MCF 10A (cell line): ENCODE measurements at regions of chr6 and their contacts with region 1.

Region 1: GRCh38 chr6:30130887-30131862 is 4.8 kb upstream of the TRIM40 start:
- DNase-seq: peak; percentile 91
- H3K4me3 Mint-ChIP-seq: peak overlapping the region; percentile 40
- H3K27ac Mint-ChIP-seq: peak overlapping the region; percentile 7
- H3K4me1 Mint-ChIP-seq: peaks cover 20% of the 10 kb centered on the region
- H3K27me3 Mint-ChIP-seq: peaks cover 28% of the 10 kb centered on the region
- CTCF ChIP-seq: peak; percentile 96

Region 2: DNA sequence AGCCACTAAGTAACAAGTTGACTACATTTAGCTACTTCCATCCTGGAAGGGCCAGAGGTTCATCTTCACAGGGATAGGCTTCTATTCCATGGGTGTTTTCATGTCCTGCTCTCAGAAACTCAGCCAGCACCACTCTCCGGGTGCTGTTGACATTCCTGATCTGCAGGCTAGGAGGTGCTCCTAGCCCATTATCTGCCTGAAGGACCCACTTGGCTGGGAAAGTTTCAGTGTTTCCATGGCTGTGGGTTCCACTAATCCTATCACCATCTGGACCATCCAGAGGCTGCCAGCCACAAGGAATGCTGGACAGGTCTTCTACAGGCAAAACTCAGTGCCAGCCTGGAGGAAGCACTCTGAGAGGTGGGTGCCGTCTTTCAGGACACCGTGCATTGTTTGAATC is 258.4 kb before region 1 on chr6:
- CTCF ChIA-PET with region 1: no interaction called
- POLR2A ChIA-PET with region 1: no interaction called
- intact Hi-C with region 1: no loop called
- DNase-seq: no peak
- H3K4me3 Mint-ChIP-seq: no peak overlapping the region
- H3K27ac Mint-ChIP-seq: no peak overlapping the region
- H3K4me1 Mint-ChIP-seq: no peaks in the 10 kb centered on the region
- H3K27me3 Mint-ChIP-seq: peaks cover 23% of the 10 kb centered on the region
- CTCF ChIP-seq: no peak

Region 3: GRCh38 chr6:29995340-29995777 is 135.8 kb before region 1 on chr6:
- CTCF ChIA-PET with region 1: no interaction called
- POLR2A ChIA-PET with region 1: no interaction called
- intact Hi-C with region 1: no loop called
- DNase-seq: peak; percentile 91
- H3K4me3 Mint-ChIP-seq: no peak overlapping the region
- H3K27ac Mint-ChIP-seq: no peak overlapping the region
- H3K4me1 Mint-ChIP-seq: peaks cover 45% of the 10 kb centered on the region
- H3K27me3 Mint-ChIP-seq: peaks cover 10% of the 10 kb centered on the region
- CTCF ChIP-seq: no peak

Region 4: DNA sequence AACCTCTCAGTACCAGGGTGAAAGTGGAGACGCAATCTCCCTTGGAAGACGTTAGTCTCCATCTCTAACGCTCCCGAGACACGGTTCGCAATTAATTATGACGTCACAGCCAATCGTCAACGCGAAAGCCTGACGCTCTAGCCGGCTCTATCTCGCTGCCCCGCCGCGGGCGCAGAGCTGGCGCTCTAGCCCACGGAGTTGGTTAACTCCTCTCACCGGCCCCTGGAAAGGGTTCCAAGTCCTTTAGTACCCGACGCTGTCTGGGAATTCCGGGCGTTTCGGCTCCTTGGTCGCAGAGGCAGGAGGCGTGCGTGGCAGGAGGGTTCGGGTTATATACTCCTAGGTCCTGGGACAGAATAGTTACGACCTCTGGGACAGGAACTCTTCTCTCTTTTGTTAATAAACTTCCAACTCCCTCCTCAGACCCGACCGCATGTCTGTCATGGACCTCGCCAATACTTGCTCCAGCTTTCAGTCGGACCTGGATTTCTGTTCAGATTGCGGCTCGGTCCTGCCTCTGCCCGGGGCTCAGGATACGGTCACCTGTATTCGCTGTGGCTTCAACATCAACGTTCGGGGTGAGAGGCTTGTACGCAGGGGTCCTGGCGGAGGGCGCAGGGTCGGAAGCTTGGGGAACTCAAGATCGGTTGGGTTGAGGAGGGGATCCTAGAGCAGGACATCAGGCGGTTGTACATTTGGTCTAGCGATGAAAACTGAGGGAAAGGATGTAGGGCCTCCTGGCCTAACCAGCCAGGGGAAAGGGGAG is 69.9 kb before region 1 on chr6 and contains the start of gene POLR1H:
- CTCF ChIA-PET with region 1: interaction called, 12 read pairs
- POLR2A ChIA-PET with region 1: interaction called, 11 read pairs
- intact Hi-C with region 1: no loop called
- DNase-seq: peak; percentile 97
- H3K4me3 Mint-ChIP-seq: peak within 1 kb of the TSS; percentile 96
- H3K27ac Mint-ChIP-seq: peak within 1 kb of the TSS; percentile 92
- H3K4me1 Mint-ChIP-seq: peaks cover 12% of the 10 kb centered on the region
- H3K27me3 Mint-ChIP-seq: no peaks in the 10 kb centered on the region
- CTCF ChIP-seq: no peak
- total RNA-seq, gene POLR1H: 60.9 and 68.3 TPM in 2 replicates

Region 5: GRCh38 chr6:30091577-30092381 is 39.4 kb before region 1 on chr6:
- CTCF ChIA-PET with region 1: interaction called, 13 read pairs
- POLR2A ChIA-PET with region 1: no interaction called
- intact Hi-C with region 1: no loop called
- DNase-seq: peak; percentile 79
- H3K4me3 Mint-ChIP-seq: no peak overlapping the region
- H3K27ac Mint-ChIP-seq: peak overlapping the region; percentile 67
- H3K4me1 Mint-ChIP-seq: peaks cover 25% of the 10 kb centered on the region
- H3K27me3 Mint-ChIP-seq: no peaks in the 10 kb centered on the region
- CTCF ChIP-seq: no peak

Region 6: DNA sequence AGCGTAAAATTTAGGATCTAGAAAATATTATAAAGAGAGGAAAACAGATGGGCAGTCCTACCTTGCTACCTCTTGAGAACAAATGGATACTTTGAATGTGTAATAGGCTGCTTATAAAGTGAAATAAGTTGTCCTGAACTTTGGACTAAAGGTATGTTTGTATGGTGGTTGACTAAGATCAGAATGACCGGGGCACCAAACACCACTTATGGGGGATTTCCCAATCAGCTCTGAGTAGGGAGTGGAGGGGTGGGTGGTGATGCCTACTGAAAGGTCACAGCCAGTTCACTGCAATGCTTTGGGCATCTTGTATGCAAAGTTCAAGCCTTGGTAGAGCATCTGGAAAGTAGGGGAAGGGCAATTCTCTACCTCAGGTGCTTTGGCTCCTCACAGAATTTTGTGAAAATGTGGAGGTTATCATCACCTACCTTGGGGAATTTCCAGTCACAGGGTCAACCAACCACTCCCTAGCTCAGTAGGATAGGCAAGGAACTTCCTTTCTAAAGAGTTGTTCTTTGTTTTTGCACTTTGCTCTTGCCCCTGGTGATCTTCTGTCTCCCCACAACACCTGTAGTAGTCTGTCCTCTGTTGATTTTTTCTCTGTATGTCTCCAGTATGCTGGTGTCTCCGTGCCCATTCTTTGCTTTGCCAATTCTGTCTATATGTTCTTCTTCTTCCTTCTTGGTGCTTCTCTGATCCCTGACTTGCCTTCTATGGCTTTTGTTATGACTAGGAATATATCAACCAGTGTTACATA is 18.0 kb before region 1 on chr6 and contains the start of gene TRIM31:
- CTCF ChIA-PET with region 1: interaction called, 22 read pairs
- POLR2A ChIA-PET with region 1: interaction called, 3 read pairs
- intact Hi-C with region 1: no loop called
- DNase-seq: no peak
- H3K4me3 Mint-ChIP-seq: no peak within 1 kb of the TSS
- H3K27ac Mint-ChIP-seq: no peak within 1 kb of the TSS
- H3K4me1 Mint-ChIP-seq: no peaks in the 10 kb centered on the region
- H3K27me3 Mint-ChIP-seq: peaks cover 32% of the 10 kb centered on the region
- CTCF ChIP-seq: no peak
- total RNA-seq, gene TRIM31: not detected in 2 replicates

Region 7: GRCh38 chr6:30154709-30155519 is 23.7 kb after region 1 on chr6:
- CTCF ChIA-PET with region 1: interaction called, 25 read pairs
- POLR2A ChIA-PET with region 1: interaction called, 3 read pairs
- intact Hi-C with region 1: no loop called
- DNase-seq: peak; percentile 93
- H3K4me3 Mint-ChIP-seq: peak overlapping the region; percentile 5
- H3K27ac Mint-ChIP-seq: peak overlapping the region; percentile 44
- H3K4me1 Mint-ChIP-seq: peaks cover 26% of the 10 kb centered on the region
- H3K27me3 Mint-ChIP-seq: no peaks in the 10 kb centered on the region
- CTCF ChIP-seq: no peak

Region 8: GRCh38 chr6:30169658-30170614 is 38.8 kb after region 1 on chr6:
- CTCF ChIA-PET with region 1: interaction called, 24 read pairs
- POLR2A ChIA-PET with region 1: no interaction called
- intact Hi-C with region 1: loop called (anchors 1 kb)
- DNase-seq: peak; percentile 63
- H3K4me3 Mint-ChIP-seq: no peak overlapping the region
- H3K27ac Mint-ChIP-seq: no peak overlapping the region
- H3K4me1 Mint-ChIP-seq: no peaks in the 10 kb centered on the region
- H3K27me3 Mint-ChIP-seq: peaks cover 13% of the 10 kb centered on the region
- CTCF ChIP-seq: peak; percentile 81

Region 9: DNA sequence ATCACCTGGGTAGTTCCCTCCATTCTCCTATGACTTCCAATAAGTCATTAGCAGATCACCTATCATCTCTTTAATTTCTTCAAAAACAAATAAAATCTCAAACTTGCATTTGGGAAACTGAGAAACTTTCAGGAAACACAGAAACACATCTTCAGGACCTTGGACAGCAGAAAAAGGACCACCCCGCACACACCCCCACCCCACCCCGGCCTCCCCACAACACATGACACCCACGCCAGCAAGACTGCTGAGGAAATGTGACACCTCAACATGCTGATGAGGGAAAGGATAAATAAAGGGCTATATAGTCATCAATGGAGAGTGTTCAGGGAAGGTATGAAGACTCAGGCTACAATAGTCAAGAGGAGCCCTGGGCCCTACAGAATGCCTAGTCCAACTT is 179.9 kb after region 1 on chr6:
- CTCF ChIA-PET with region 1: no interaction called
- POLR2A ChIA-PET with region 1: no interaction called
- intact Hi-C with region 1: no loop called
- DNase-seq: no peak
- H3K4me3 Mint-ChIP-seq: no peak overlapping the region
- H3K27ac Mint-ChIP-seq: no peak overlapping the region
- H3K4me1 Mint-ChIP-seq: peaks cover 2% of the 10 kb centered on the region
- H3K27me3 Mint-ChIP-seq: no peaks in the 10 kb centered on the region
- CTCF ChIP-seq: no peak

Region 10: DNA sequence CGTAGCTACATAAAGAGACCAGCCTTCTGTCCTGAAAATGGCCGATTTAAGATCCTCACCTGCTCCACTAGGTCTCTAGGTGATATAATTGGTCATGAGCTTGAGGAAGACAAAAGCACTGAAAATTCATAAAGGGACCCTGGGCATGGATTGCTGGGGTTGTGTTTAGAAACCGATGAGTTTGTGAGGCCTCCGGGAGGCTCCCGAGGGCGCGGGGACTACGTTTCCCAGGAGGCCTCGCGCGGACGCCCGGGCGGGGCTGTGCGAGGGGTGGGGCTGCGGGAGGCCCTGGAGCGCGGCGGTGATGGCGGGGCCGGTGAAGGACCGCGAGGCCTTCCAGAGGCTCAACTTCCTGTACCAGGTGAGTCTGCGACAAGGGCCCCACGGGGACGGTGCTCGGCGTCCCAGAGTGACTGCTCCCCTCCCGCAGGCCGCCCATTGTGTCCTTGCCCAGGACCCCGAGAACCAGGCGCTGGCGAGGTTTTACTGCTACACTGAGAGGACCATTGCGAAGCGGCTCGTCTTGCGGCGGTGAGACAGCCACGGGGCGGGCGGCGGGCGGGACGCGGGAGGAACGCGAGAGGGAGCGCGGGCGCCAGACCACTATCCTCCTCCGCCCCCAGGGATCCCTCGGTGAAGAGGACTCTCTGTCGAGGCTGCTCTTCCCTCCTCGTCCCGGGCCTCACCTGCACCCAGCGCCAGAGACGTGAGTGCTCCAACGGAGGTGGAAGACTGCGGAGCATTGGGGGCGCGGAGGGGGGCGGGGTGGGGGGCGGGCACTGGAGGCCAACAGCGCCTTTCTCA is 213.9 kb after region 1 on chr6 and contains the start of gene RPP21:
- CTCF ChIA-PET with region 1: no interaction called
- POLR2A ChIA-PET with region 1: no interaction called
- intact Hi-C with region 1: no loop called
- DNase-seq: peak; percentile 76
- H3K4me3 Mint-ChIP-seq: peak within 1 kb of the TSS; percentile 78
- H3K27ac Mint-ChIP-seq: peak within 1 kb of the TSS; percentile 39
- H3K4me1 Mint-ChIP-seq: peaks cover 7% of the 10 kb centered on the region
- H3K27me3 Mint-ChIP-seq: no peaks in the 10 kb centered on the region
- CTCF ChIP-seq: no peak
- total RNA-seq, gene RPP21: 63.0 and 74.1 TPM in 2 replicates